Tibial artery (tissue), 4 donors: ENCODE measurements at regions of chr6 and their contacts with region 1.

Region 1: GRCh38 chr6:157607317-157608109 is 215.5 kb upstream of the SNX9 start:
- DNase-seq: peak in 1 of 2 donors; percentile 29
- H3K4me3 ChIP-seq: no peak overlapping the region
- H3K27ac ChIP-seq: no peak overlapping the region
- H3K4me1 ChIP-seq: no peaks in the 10 kb centered on the region
- H3K27me3 ChIP-seq: no peaks in the 10 kb centered on the region
- CTCF ChIP-seq: no peak

Region 2: GRCh38 chr6:157314705-157315321 is 292.7 kb before region 1 on chr6:
- intact Hi-C with region 1: loop called (anchors 10 kb)
- DNase-seq: no peak
- H3K4me3 ChIP-seq: no peak overlapping the region
- H3K27ac ChIP-seq: no peak overlapping the region
- H3K4me1 ChIP-seq: peaks cover 0 to 25% (median 15%) of the 10 kb centered on the region in 4 donors
- H3K27me3 ChIP-seq: no peaks in the 10 kb centered on the region
- CTCF ChIP-seq: peak; percentile 67 to 86

Region 3: GRCh38 chr6:157486572-157486971 is 120.9 kb before region 1 on chr6:
- intact Hi-C with region 1: no loop called
- DNase-seq: no peak
- H3K4me3 ChIP-seq: no peak overlapping the region
- H3K27ac ChIP-seq: no peak overlapping the region
- H3K4me1 ChIP-seq: no peaks in the 10 kb centered on the region
- H3K27me3 ChIP-seq: no peaks in the 10 kb centered on the region
- CTCF ChIP-seq: no peak

Region 4: DNA sequence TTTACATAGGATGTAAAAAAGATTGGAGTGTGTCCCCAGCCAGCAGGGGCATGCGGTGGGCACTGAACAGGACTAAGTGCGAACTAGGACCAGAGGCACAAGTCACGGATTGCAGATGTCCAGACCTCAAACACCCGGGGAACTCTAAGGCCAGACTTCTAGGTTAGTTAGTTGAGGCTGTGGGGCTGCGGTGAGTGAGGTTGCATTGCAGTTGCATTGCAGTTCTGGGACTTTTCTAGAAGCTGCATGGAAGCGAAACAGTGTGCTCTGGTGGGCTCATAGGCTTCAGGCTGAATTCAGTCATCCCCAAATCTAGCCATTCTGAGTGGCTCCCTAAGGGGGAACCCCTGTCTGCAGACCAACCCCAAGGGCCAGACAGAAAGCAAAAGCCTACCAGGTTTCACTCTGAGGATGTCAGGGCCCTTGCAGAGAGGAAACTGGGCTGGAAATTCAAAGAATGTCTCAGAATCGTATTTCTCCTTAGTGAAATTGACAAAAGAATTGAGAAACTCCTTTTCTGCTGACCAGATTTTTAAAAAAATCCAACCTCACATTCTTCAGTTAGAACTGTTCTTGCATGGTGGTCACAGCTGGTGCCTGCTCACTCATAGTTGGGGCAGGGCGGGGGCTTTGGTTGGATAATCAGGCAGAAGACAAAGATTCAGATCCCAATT is 43.8 kb before region 1 on chr6:
- intact Hi-C with region 1: no loop called
- DNase-seq: peak in 1 of 2 donors; percentile 39
- H3K4me3 ChIP-seq: no peak overlapping the region
- H3K27ac ChIP-seq: no peak overlapping the region
- H3K4me1 ChIP-seq: peaks cover 0 to 6% (median 0%) of the 10 kb centered on the region in 4 donors
- H3K27me3 ChIP-seq: no peaks in the 10 kb centered on the region
- CTCF ChIP-seq: no peak